Activated T-helper 2 cell treated with anti-CD3 and anti-CD28 coated beads, Interferon-gamma antibody, Interleukin-2, Interleukin-4, amounts not matched to agents 10 μg/mL and 5 μg/mL and 100 μg/mL, durations not matched to agents 14 hours and 24 hours and 36 hours (primary cell): ENCODE measurements at regions of chr18 and their contacts with region 1.

Region 1: DNA sequence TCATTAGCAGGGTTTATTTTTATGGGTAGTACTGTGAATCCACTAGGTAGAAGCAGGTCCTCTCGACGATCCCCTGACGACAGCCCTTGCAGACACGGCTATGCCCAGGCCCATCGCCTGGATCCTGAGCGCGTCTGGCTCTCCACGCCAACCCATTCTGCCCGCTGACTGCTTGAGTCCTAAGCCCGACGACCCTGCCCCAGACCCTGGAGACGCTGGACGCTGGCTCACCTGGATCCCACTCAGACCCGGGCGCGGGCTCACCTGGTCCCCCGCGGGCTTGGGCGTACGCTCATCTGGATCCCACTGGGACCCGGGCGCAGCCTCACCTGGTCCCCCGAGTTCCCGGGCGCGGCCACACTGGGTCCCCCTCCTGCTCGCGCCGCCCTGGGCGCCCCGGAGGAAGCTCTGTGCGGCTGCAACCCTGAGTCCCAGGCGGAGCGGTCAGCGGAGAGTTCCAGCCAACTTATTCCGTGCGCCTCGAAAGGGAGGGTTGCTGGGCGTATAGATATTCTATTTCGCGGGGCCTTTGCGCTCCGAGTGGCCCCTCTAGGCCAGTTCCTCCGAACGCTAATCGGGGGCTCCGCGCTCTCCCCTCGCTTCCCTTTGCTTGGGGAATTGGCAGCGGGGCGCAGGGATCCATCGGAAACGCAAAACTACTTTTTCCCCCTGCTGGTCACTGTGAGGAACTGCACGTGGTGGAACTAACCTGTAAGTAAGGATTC is 22.4 kb upstream of the RMP24 start:
- DNase-seq: peak; percentile 33
- H3K4me3 Mint-ChIP-seq: peak overlapping the region; percentile 76
- H3K27ac Mint-ChIP-seq: no peak overlapping the region
- H3K4me1 Mint-ChIP-seq: peaks cover 3% of the 10 kb centered on the region
- H3K27me3 Mint-ChIP-seq: peaks cover 14% of the 10 kb centered on the region

Region 2: DNA sequence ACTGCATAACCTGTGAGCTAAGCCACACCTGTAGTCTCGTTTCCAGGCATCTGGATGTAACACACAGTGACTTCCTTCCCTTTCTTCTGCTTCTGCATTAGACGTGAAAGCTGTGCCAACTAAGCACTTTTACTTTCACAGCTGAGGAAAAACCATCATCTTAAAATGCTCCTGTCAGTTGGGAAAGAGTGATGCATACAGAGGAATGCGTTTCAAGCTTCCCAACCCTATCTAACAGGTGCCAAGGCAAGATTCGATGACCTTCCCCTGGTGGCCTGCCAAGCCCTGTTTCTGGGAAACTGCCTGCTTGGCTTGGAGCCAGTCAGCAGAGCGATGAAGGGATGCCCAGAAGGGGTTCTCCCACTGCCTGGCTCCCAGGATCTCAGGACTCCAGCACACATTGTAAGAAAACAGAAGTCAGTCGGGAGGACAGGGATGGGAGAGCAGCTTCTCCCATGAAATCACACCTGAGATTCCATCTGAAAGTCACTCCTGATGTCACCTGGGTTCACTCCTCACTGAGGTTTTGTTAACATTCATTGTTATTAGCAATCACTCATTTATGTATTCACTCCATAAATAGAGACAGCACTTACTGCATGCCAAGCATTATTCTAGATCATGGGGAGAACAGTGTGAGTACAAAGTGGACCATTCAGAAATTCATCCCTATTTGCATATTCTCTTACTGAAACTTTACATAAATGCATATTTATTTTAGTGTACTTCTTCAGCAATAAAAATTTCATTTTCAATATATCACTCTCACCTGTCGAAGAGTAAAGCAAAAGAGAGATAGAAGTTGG is 1175.9 kb before region 1 on chr18:
- intact Hi-C with region 1: no loop called
- DNase-seq: no peak
- H3K4me3 Mint-ChIP-seq: no peak overlapping the region
- H3K27ac Mint-ChIP-seq: no peak overlapping the region
- H3K4me1 Mint-ChIP-seq: no peaks in the 10 kb centered on the region
- H3K27me3 Mint-ChIP-seq: peaks cover 1% of the 10 kb centered on the region

Region 3: GRCh38 chr18:35386600-35387351 is 563.3 kb before region 1 on chr18:
- intact Hi-C with region 1: loop called (anchors 10 kb)
- DNase-seq: peak; percentile 40
- H3K4me3 Mint-ChIP-seq: no peak overlapping the region
- H3K27ac Mint-ChIP-seq: no peak overlapping the region
- H3K4me1 Mint-ChIP-seq: peaks cover 5% of the 10 kb centered on the region
- H3K27me3 Mint-ChIP-seq: peaks cover 19% of the 10 kb centered on the region

Region 4: DNA sequence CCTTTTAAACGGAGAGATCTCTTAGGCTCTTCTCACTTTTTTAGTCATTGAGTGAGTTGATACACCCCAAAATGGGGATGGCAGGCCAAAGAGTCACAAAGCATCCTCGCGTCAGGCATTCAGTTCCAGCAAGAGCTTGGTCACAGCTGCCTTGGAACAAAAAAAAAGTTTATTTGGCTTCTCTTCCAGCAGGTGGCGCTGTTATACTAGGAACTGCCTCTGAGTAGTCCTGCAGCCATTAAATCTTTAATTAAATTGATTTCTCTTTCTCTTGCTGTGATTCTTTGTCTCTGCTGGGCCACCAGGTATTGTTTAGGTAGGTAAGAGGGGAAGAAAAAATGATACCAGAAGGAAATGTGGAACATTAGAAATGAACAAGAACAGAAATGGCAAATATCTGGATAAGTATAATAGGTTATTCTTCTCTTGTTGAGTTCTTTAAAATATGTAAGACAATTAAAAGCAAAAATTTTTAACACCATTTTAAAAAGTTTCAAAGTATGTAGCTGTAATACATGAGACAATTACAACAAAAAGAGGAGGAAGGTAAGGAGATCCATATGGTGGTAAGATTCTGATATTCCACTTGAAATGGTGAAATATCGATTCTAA is 193.5 kb before region 1 on chr18:
- intact Hi-C with region 1: loop called (anchors 1 kb)
- DNase-seq: peak; percentile 25
- H3K4me3 Mint-ChIP-seq: no peak overlapping the region
- H3K27ac Mint-ChIP-seq: no peak overlapping the region
- H3K4me1 Mint-ChIP-seq: no peaks in the 10 kb centered on the region
- H3K27me3 Mint-ChIP-seq: peaks cover 14% of the 10 kb centered on the region